SK-N-SH (cell line): ENCODE measurements at regions of chr6 and their contacts with region 1.

Region 1: DNA sequence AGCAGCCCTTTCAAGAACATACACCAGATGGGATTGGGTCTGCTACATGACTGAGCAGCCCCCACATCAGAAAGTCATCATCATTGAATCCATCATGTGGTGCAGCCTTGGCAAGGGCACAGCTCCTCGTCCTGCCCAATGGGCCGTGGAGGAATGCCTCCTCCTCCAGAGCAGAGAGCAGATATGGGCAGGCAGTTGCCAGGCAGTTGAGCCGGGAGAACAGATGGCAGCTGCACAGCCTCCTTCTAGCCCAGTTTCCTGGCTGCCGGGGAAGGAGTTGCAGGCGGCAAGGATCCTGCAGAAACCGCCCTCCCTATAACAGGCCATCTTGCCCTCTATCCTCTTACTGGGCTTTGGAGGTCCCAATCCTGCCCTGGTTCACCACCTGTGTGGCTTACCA is 11.9 kb upstream of the ZFAND3 start:
- DNase-seq: peak; percentile 68
- H3K4me3 ChIP-seq: no peak overlapping the region
- H3K27ac ChIP-seq: peak overlapping the region in 1 of 2 experiments; percentile 50; a peak in 2 of 4 replicates
- H3K4me1 ChIP-seq: peaks cover 0 to 14% of the 10 kb centered on the region in 2 experiments; a peak in 1 of 4 replicates
- H3K27me3 ChIP-seq: no peaks in the 10 kb centered on the region
- CTCF ChIP-seq: no peak
- EP300 ChIP-seq: no peak
- RAD21 ChIP-seq: peak; percentile 13; the same call in 1 of the 2 replicates

Region 2: GRCh38 chr6:37781788-37782187 is 25.9 kb before region 1 on chr6:
- CTCF ChIA-PET with region 1: no interaction called
- POLR2A ChIA-PET with region 1: interaction called, 10 read pairs
- DNase-seq: no peak
- H3K4me3 ChIP-seq: no peak overlapping the region
- H3K27ac ChIP-seq: no peak overlapping the region
- H3K4me1 ChIP-seq: peaks cover 0 to 40% of the 10 kb centered on the region in 2 experiments; a peak in 1 of 4 replicates
- H3K27me3 ChIP-seq: no peaks in the 10 kb centered on the region
- CTCF ChIP-seq: no peak
- EP300 ChIP-seq: no peak
- RAD21 ChIP-seq: no peak

Region 3: DNA sequence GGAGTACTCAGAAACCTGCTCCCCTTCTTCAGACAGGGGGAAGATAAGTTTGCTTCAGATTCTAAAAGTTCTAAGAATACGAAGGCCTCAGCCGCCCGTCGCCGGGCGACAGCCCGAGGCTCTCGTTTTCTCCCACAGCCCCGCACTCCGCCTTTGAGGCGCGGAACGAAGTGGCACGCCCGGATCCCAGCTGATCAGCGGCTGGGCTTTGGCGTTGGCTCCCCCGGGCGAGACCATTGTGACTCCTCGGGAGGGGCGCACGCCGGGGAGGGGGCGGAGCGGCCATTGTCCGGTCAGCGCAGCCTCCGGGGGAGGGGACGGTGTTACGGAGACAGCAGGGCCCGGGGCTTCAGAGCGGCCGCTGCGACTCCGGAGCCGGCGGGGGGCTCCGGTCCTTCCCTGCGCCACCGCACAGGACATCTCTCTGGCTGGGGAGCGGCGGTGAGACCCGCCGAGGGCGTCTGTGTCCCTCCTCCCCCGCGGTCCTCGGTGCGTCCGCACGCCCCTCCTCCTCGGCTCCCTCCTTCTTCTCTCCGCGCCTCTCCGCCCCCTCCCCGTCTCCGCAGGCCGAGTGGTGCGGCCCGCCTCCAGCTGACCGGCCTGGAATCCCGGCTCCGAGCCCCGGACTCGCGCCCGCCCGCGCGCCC is 11.6 kb after region 1 on chr6 and contains the start of gene ZFAND3:
- CTCF ChIA-PET with region 1: interaction called, 7 read pairs
- POLR2A ChIA-PET with region 1: interaction called, 16 read pairs
- DNase-seq: peak; percentile 96
- H3K4me3 ChIP-seq: peak within 1 kb of the TSS; percentile 87 to 89
- H3K27ac ChIP-seq: peak within 1 kb of the TSS; percentile 96 to 98
- H3K4me1 ChIP-seq: peaks cover 24 to 27% of the 10 kb centered on the region in 2 experiments
- H3K27me3 ChIP-seq: no peaks in the 10 kb centered on the region
- CTCF ChIP-seq: no peak
- EP300 ChIP-seq: peak in 1 of 2 experiments; percentile 27; a peak in 1 of 4 replicates
- RAD21 ChIP-seq: no peak
- polyA plus RNA-seq, gene ZFAND3: 12.9 and 16.7 TPM in 2 replicates

Region 4: GRCh38 chr6:37868447-37868825 is 60.8 kb after region 1 on chr6:
- CTCF ChIA-PET with region 1: no interaction called
- POLR2A ChIA-PET with region 1: no interaction called
- DNase-seq: no peak
- H3K4me3 ChIP-seq: no peak overlapping the region
- H3K27ac ChIP-seq: peak overlapping the region in 1 of 2 experiments; percentile 25; a peak in 2 of 4 replicates
- H3K4me1 ChIP-seq: peaks cover 4 to 5% of the 10 kb centered on the region in 2 experiments; a peak in 3 of 4 replicates
- H3K27me3 ChIP-seq: no peaks in the 10 kb centered on the region
- CTCF ChIP-seq: no peak
- EP300 ChIP-seq: no peak
- RAD21 ChIP-seq: no peak